ENCODE measurements at regions of chr15 and their contacts with region 1.

Region 1: DNA sequence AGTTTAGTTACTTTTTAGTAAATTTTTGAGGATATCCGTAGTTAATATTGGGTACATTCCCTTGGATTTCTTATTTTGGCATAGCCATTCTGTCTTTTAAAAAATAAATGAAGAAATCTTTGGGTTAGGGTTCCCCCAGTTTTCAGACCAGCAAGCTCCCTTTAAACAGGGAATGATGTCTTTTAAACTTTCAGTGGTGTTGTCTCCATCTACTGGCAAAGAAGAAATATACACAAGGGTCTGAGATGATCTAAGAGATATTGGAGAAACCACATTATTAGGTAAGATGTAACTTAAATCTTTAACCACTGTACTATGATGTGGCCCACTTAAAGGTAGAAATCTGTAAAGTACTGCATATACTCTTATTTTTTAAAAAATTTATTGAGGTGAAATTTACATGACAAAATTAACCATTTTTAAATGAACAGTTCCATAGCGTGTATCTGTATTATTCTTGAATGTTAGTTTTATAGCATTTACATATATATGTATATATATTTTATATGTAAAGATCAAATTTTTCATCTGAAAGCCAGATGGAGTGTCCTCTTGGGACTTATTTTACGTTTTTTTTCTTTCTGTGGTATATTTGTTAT is 35.1 kb upstream of the EIF3J start:
- DNase-seq: peak; percentile 50
- H3K4me3 ChIP-seq: no peak overlapping the region
- H3K27ac ChIP-seq: no peak overlapping the region
- H3K4me1 ChIP-seq: no peaks in the 10 kb centered on the region
- H3K27me3 ChIP-seq: no peaks in the 10 kb centered on the region
- CTCF ChIP-seq: peak; percentile 20 to 41
- POLR2A ChIP-seq: no peak

Region 2: GRCh38 chr15:43872416-43873020 is 629.3 kb before region 1 on chr15:
- CTCF ChIA-PET with region 1: interaction called, 28 read pairs
- POLR2A ChIA-PET with region 1: no interaction called
- dilution Hi-C with region 1: no loop called
- intact Hi-C with region 1: loop called (anchors 2 kb)
- DNase-seq: peak; percentile 70
- H3K4me3 ChIP-seq: no peak overlapping the region
- H3K27ac ChIP-seq: no peak overlapping the region
- H3K4me1 ChIP-seq: peaks cover 3% of the 10 kb centered on the region
- H3K27me3 ChIP-seq: no peaks in the 10 kb centered on the region
- CTCF ChIP-seq: peak; percentile 55 to 68
- POLR2A ChIP-seq: no peak

Region 3: DNA sequence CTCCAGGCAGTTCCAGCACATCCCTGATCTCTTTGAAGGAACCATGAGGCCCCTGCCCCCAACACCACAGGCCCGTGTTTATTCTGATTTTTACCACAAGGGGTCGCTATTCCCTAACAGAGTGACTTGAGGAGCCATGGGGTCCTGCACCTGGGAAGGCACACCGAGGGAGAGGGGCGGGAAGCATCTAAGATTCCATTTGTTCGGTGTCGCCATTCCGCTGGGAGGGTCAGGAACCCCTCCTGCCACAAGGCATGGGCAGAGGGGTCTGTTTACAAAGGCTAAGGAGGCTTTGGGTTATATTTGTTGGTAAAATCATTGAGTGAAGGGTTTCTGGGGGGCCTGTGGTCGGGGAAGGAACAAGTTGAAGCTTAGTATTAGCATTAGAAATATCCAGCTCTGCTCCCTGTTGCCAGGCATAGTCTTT is 598.0 kb before region 1 on chr15:
- CTCF ChIA-PET with region 1: interaction called, 32 read pairs
- POLR2A ChIA-PET with region 1: no interaction called
- dilution Hi-C with region 1: no loop called
- intact Hi-C with region 1: loop called (anchors 2 kb)
- DNase-seq: peak; percentile 71
- H3K4me3 ChIP-seq: no peak overlapping the region
- H3K27ac ChIP-seq: no peak overlapping the region
- H3K4me1 ChIP-seq: no peaks in the 10 kb centered on the region
- H3K27me3 ChIP-seq: no peaks in the 10 kb centered on the region
- CTCF ChIP-seq: peak; percentile 62 to 81
- POLR2A ChIP-seq: no peak

Region 4: DNA sequence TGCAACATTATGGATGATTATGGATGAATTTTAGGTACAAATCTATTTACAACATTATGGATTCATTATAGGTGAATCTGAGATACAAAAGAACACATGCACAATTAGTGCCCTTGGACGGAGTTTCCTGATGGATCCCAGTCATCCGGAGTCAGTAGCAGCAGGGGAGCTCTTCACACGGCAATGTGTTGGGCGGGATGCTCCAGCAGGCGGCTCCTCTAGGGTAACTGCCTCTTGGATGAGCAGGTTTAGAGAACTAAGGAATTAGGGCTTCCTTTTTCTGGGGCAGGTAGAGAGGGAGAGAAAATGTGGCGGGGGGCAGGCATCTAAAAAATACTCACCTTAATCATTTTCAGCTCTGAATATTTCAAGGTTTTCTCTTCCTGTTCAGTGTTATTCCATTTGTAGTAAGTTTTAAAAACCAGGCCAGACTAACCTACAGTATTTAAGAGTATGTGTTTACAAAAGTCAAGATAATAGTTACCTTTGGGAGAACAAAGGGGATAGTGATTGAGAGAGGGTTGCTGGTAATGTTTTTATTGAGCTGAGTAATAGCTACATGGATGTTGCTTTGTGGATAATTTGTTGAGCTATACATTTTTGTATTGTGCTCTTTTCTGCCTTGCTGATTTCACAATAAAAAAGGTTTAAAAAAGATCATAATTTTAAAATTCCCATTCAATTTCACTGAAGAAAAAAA is 240.7 kb before region 1 on chr15:
- CTCF ChIA-PET with region 1: interaction called, 10 read pairs
- POLR2A ChIA-PET with region 1: no interaction called
- dilution Hi-C with region 1: no loop called
- intact Hi-C with region 1: no loop called
- DNase-seq: no peak
- H3K4me3 ChIP-seq: no peak overlapping the region
- H3K27ac ChIP-seq: no peak overlapping the region
- H3K4me1 ChIP-seq: no peaks in the 10 kb centered on the region
- H3K27me3 ChIP-seq: peaks cover 6 to 9% of the 10 kb centered on the region in 2 experiments
- CTCF ChIP-seq: no peak
- POLR2A ChIP-seq: no peak

Region 5: GRCh38 chr15:44426975-44427755 is 74.7 kb before region 1 on chr15 and contains the start of gene CTDSPL2:
- CTCF ChIA-PET with region 1: interaction called, 57 read pairs
- POLR2A ChIA-PET with region 1: interaction called, 6 read pairs
- dilution Hi-C with region 1: no loop called
- intact Hi-C with region 1: loop called (anchors 1 kb)
- DNase-seq: peak; percentile 100
- H3K4me3 ChIP-seq: peak within 1 kb of the TSS; percentile 62 to 96 (median 68)
- H3K27ac ChIP-seq: peak within 1 kb of the TSS; percentile 96
- H3K4me1 ChIP-seq: peaks cover 18% of the 10 kb centered on the region
- H3K27me3 ChIP-seq: no peaks in the 10 kb centered on the region
- CTCF ChIP-seq: peak; percentile 17 to 46
- POLR2A ChIP-seq: peak; percentile 73
- total RNA-seq, gene CTDSPL2: 46.0 and 55.1 TPM in 2 replicates

Region 6: GRCh38 chr15:44482088-44482487 is 19.8 kb before region 1 on chr15:
- CTCF ChIA-PET with region 1: interaction called, 15 read pairs
- POLR2A ChIA-PET with region 1: no interaction called
- dilution Hi-C with region 1: no loop called
- intact Hi-C with region 1: no loop called
- DNase-seq: no peak
- H3K4me3 ChIP-seq: no peak overlapping the region
- H3K27ac ChIP-seq: no peak overlapping the region
- H3K4me1 ChIP-seq: no peaks in the 10 kb centered on the region
- H3K27me3 ChIP-seq: no peaks in the 10 kb centered on the region
- CTCF ChIP-seq: no peak
- POLR2A ChIP-seq: no peak

Region 7: GRCh38 chr15:44516436-44516835 is 14.6 kb after region 1 on chr15:
- CTCF ChIA-PET with region 1: interaction called, 12 read pairs
- POLR2A ChIA-PET with region 1: no interaction called
- dilution Hi-C with region 1: no loop called
- intact Hi-C with region 1: no loop called
- DNase-seq: no peak
- H3K4me3 ChIP-seq: no peak overlapping the region
- H3K27ac ChIP-seq: no peak overlapping the region
- H3K4me1 ChIP-seq: peaks cover 9% of the 10 kb centered on the region
- H3K27me3 ChIP-seq: no peaks in the 10 kb centered on the region
- CTCF ChIP-seq: no peak
- POLR2A ChIP-seq: no peak

Region 8: GRCh38 chr15:45022871-45023658 is 521.2 kb after region 1 on chr15 and contains the start of gene SORD:
- CTCF ChIA-PET with region 1: no interaction called
- POLR2A ChIA-PET with region 1: no interaction called
- dilution Hi-C with region 1: no loop called
- intact Hi-C with region 1: no loop called
- DNase-seq: peak; percentile 90
- H3K4me3 ChIP-seq: peak within 1 kb of the TSS; percentile 46 to 75 (median 70)
- H3K27ac ChIP-seq: peak within 1 kb of the TSS; percentile 53
- H3K4me1 ChIP-seq: peaks cover 25% of the 10 kb centered on the region
- H3K27me3 ChIP-seq: peaks cover 0 to 2% of the 10 kb centered on the region in 2 experiments
- CTCF ChIP-seq: no peak
- POLR2A ChIP-seq: no peak
- total RNA-seq, gene SORD: 16.6 and 23.0 TPM in 2 replicates

Measured in endothelial cell of umbilical vein (primary cell).